H1 (cell line): ENCODE measurements at regions of chr11 and their contacts with region 1.

Region 1: DNA sequence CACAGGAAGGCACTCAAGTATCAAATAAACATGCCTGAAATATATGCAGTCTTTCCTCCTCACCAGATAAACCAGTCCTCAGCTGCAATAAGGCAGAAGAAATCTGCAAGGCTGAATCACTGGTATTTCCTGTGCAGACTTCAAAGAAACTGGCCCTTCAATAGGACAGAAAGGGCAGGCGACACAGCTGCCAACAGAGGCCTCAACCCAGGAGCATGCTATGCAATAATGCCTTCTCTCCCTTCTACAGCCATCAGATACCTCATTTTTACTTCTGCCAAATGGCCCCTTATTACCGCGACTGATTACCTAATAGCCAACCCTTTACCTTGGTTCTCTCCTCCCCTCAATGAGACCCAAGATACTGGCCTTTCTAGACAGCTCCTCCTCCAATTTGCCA is 8.0 kb downstream of the NUMA1 start:
- DNase-seq: no peak
- H3K4me3 ChIP-seq: no peak overlapping the region
- H3K27ac ChIP-seq: no peak overlapping the region
- H3K4me1 ChIP-seq: peaks cover 0 to 11% (median 2%) of the 10 kb centered on the region in 4 experiments; a peak in 3 of 7 replicates
- H3K27me3 ChIP-seq: no peaks in the 10 kb centered on the region
- CTCF ChIP-seq: no peak
- EP300 ChIP-seq: no peak
- POLR2A ChIP-seq: no peak
- RAD21 ChIP-seq: no peak

Region 2: GRCh38 chr11:72024069-72024754 is 48.1 kb before region 1 on chr11:
- CTCF ChIA-PET with region 1: interaction called, 18 read pairs
- POLR2A ChIA-PET with region 1: no interaction called
- DNase-seq: no peak
- H3K4me3 ChIP-seq: no peak overlapping the region
- H3K27ac ChIP-seq: peak overlapping the region; percentile 26; the same call in 1 of the 2 replicates
- H3K4me1 ChIP-seq: no peaks in the 10 kb centered on the region
- H3K27me3 ChIP-seq: no peaks in the 10 kb centered on the region
- CTCF ChIP-seq: no peak
- EP300 ChIP-seq: no peak
- POLR2A ChIP-seq: no peak
- RAD21 ChIP-seq: no peak